ENCODE measurements at regions of chr9 and their contacts with region 1.

Region 1: GRCh38 chr9:133375724-133376654 is at the starts of genes STKLD1 and SURF4:
- DNase-seq: peak; percentile 97
- ATAC-seq: peak; percentile 70
- H3K4me3 Mint-ChIP-seq: peak within 1 kb of the TSS; percentile 100
- H3K27ac Mint-ChIP-seq: peak within 1 kb of the TSS; percentile 99
- H3K4me1 Mint-ChIP-seq: peaks cover 35% of the 10 kb centered on the region
- H3K27me3 Mint-ChIP-seq: no peaks in the 10 kb centered on the region
- total RNA-seq, gene STKLD1: 0.40 to 0.82 TPM
- total RNA-seq, gene SURF4: 283 to 349 TPM

Region 2: DNA sequence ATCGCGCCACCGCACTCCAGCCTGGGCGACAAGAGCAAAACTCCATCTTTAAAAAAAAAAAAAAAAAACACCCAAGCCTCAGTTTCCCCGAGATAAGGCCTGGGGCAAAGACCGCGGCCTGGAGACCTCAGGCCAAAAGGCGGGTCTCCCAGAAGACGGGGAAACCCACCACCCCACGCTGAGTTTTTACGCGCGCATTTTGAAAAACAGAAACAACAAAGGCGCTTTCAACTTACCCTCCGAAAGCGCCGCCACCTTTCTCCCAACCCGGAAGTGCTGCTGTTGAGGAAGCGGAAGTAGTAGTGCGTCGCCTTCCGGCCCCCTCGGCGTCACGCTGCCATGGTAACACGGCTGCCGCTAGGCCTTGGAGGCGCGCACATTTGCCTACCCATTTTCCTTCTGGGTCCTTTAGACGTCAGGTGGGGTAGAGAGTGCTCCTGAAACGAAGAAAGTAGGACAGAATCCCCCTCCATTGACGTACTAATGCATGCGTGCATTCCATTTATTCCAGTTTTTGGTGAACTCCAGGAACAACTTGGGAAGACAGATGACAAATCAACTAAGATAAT is 969.4 kb before region 1 on chr9 and contains the start of gene TTF1:
- CTCF ChIA-PET with region 1: no interaction called
- POLR2A ChIA-PET with region 1: no interaction called
- intact Hi-C with region 1: no loop called
- DNase-seq: peak; percentile 97
- ATAC-seq: peak; percentile 79
- H3K4me3 Mint-ChIP-seq: peak within 1 kb of the TSS; percentile 96
- H3K27ac Mint-ChIP-seq: peak within 1 kb of the TSS; percentile 91
- H3K4me1 Mint-ChIP-seq: peaks cover 56% of the 10 kb centered on the region
- H3K27me3 Mint-ChIP-seq: peaks cover 9% of the 10 kb centered on the region
- total RNA-seq, gene TTF1: 31.9 to 33.4 TPM

Region 3: GRCh38 chr9:133023117-133023890 is 352.7 kb before region 1 on chr9:
- CTCF ChIA-PET with region 1: no interaction called
- POLR2A ChIA-PET with region 1: no interaction called
- intact Hi-C with region 1: loop called in 1 of 2 experiments (anchors 2 kb)
- DNase-seq: peak; percentile 87
- ATAC-seq: peak; percentile 70
- H3K4me3 Mint-ChIP-seq: peak overlapping the region; percentile 49
- H3K27ac Mint-ChIP-seq: peak overlapping the region; percentile 74
- H3K4me1 Mint-ChIP-seq: peaks cover 18% of the 10 kb centered on the region
- H3K27me3 Mint-ChIP-seq: no peaks in the 10 kb centered on the region

Region 4: DNA sequence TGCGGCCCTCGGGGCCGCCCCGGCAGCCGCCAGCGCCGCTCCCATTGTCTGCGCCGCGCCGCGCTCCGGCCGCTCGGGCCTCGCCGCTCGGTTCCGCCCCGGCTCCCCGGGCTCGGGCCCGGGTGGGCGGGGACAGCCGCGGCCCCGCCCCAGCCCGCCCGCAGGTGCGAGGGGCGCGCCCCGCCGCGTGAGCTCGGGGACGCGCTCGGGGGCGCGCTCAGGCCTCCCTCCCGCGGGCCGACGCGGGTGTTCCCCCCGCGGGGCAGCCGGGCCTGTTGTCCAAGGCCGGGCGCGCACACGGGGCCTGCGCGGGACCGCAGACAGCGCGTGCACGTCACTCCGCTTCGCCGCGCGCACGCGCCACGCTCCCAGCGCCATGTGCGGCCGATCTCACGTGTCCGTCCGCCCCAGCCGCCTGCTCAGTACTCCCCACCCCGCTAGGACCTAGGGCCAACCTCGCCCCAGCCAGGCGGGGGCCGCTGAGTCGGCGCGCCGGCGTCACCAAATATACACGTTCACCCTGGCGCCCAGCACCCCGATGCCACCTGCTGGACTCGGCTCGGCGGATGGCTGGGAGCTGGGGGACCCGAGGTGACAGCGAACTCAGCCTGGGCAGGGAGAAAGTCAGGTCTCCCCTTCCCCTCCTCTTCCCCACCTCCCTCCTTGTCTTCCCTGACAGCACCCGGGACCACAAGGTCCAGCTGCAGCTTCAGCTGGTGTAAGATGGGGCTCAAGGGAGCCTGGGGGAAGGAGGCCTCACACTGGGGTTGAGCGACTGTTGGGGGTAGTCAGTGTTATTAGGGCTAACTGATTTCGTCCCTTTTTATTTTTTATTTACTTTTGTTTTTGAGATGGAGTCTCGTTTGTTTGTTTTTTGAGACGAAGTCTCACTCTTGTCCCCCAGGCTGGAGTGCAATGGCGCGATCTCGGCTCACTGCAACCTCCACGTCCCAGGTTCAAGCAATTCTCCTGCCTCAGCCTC is 226.6 kb before region 1 on chr9:
- CTCF ChIA-PET with region 1: interaction called, 4 read pairs
- POLR2A ChIA-PET with region 1: no interaction called
- intact Hi-C with region 1: loop called (anchors 1 to 5 kb)
- DNase-seq: peak; percentile 92
- ATAC-seq: peak; percentile 68
- H3K4me3 Mint-ChIP-seq: peak overlapping the region; percentile 63
- H3K27ac Mint-ChIP-seq: peak overlapping the region; percentile 67
- H3K4me1 Mint-ChIP-seq: peaks cover 27% of the 10 kb centered on the region
- H3K27me3 Mint-ChIP-seq: no peaks in the 10 kb centered on the region

Region 5: DNA sequence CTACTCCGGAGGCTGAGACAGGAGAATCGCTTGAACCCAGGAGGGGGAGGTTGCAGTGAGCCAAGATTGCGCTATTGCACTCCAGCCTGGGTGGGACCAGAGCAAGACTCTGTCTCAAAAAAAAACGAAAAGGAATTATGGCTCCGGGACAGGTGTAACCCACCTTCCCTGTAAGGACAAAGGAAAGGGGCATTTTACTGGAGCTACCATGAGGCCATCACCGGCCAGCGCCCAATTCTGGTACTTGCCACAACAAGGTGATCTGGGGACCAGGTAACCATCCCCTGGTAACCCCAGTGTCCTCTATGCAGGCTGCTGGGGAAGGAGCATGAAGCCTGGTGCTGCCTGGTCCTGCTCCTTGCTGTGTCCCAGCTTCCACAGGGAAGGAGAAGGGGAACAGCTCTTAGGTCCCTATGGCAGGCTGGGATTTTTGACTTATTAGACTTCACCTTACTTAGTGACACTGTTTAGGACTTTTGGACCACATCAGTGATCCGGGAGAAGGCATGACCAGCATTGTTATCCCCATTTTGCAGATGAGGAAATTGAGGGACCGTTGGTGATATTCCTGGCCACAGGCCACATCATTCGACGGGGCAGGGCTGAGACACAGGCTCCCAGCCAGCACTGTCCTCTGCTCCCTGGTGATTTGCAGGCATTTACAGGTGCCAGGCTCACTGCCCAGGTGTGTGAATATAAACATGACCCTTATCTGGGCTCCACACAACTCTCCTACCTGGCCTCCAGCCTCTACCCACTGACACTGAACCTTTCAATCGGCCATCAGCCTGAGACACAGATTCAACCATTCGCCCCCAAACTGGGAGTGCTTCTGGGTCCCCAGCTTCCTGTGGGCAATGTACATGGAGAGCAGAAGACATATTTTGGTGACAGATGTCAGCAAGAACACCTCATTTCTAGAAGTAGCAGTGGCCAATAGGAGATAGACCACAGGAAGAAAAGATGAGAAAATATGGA is 74.4 kb before region 1 on chr9:
- CTCF ChIA-PET with region 1: no interaction called
- POLR2A ChIA-PET with region 1: no interaction called
- intact Hi-C with region 1: no loop called
- DNase-seq: no peak
- ATAC-seq: no peak
- H3K4me3 Mint-ChIP-seq: no peak overlapping the region
- H3K27ac Mint-ChIP-seq: no peak overlapping the region
- H3K4me1 Mint-ChIP-seq: no peaks in the 10 kb centered on the region
- H3K27me3 Mint-ChIP-seq: peaks cover 3% of the 10 kb centered on the region

Region 6: DNA sequence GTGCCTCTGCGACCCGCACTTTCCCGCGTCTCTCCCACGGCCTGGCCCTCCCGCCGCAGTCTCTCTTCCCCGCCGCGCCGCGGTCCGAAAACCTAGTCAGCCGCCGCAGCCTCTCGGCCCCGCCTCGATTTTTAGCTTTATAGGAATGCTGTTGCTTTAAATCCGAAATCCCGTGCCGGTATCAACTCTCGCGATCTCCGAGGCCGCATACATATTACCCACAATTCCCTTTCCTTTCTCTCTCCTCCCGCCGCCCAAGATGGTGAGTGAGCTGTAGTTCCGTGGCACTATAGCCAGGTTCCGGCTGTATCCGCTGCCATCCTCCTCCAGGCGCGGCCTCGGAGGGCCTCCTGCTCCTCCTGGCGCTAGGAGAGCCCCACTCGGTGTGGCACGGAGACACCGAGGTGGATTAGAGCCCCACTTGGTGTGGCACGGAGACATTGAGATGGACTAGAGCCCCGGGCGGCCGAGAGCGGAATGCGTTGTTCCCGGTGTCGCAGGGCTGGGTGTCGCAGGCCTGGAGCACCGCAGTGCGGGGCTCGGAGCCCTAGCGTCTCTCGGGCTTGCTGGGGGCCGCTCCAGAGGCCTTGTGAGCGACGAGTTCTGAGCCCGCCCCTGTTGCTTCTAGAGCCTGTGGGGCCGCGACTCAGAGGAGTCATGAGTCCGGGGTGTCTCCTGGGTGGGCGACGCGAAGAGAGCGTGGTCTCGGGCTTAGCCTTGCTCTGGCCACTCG is 27.8 kb before region 1 on chr9 and contains the starts of genes MED22 and RPL7A:
- CTCF ChIA-PET with region 1: interaction called, 44 read pairs
- POLR2A ChIA-PET with region 1: interaction called, 287 read pairs
- intact Hi-C with region 1: loop called (anchors 1 kb)
- DNase-seq: peak; percentile 96
- ATAC-seq: peak; percentile 83
- H3K4me3 Mint-ChIP-seq: peak within 1 kb of the TSS; percentile 97
- H3K27ac Mint-ChIP-seq: peak within 1 kb of the TSS; percentile 97
- H3K4me1 Mint-ChIP-seq: peaks cover 36% of the 10 kb centered on the region
- H3K27me3 Mint-ChIP-seq: no peaks in the 10 kb centered on the region
- total RNA-seq, gene MED22: 22.9 to 26.4 TPM
- total RNA-seq, gene RPL7A: 3,179 to 3,246 TPM

Region 7: GRCh38 chr9:133459476-133460404 is 83.8 kb after region 1 on chr9 and contains the start of gene CACFD1:
- CTCF ChIA-PET with region 1: no interaction called
- POLR2A ChIA-PET with region 1: interaction called, 5 read pairs
- intact Hi-C with region 1: loop called in 1 of 2 experiments (anchors 1 kb)
- DNase-seq: peak; percentile 96
- ATAC-seq: peak; percentile 88
- H3K4me3 Mint-ChIP-seq: peak within 1 kb of the TSS; percentile 74
- H3K27ac Mint-ChIP-seq: peak within 1 kb of the TSS; percentile 42
- H3K4me1 Mint-ChIP-seq: no peaks in the 10 kb centered on the region
- H3K27me3 Mint-ChIP-seq: no peaks in the 10 kb centered on the region
- total RNA-seq, gene CACFD1: 0.87 to 0.90 TPM

Region 8: GRCh38 chr9:134067904-134068743 is 692.1 kb after region 1 on chr9 and contains the start of gene BRD3:
- CTCF ChIA-PET with region 1: no interaction called
- POLR2A ChIA-PET with region 1: no interaction called
- intact Hi-C with region 1: loop called in 1 of 2 experiments (anchors 2 kb)
- DNase-seq: peak; percentile 91
- ATAC-seq: peak; percentile 85
- H3K4me3 Mint-ChIP-seq: peak within 1 kb of the TSS; percentile 85
- H3K27ac Mint-ChIP-seq: peak within 1 kb of the TSS; percentile 84
- H3K4me1 Mint-ChIP-seq: peaks cover 28% of the 10 kb centered on the region
- H3K27me3 Mint-ChIP-seq: peaks cover 14% of the 10 kb centered on the region
- total RNA-seq, gene BRD3: 33.8 to 39.2 TPM

Measured in activated CD4-positive, alpha-beta T cell treated with anti-CD3 and anti-CD28 coated beads for 36 hours (primary cell).